ENCODE measurements at regions of chr2 and their contacts with region 1.

Region 1: DNA sequence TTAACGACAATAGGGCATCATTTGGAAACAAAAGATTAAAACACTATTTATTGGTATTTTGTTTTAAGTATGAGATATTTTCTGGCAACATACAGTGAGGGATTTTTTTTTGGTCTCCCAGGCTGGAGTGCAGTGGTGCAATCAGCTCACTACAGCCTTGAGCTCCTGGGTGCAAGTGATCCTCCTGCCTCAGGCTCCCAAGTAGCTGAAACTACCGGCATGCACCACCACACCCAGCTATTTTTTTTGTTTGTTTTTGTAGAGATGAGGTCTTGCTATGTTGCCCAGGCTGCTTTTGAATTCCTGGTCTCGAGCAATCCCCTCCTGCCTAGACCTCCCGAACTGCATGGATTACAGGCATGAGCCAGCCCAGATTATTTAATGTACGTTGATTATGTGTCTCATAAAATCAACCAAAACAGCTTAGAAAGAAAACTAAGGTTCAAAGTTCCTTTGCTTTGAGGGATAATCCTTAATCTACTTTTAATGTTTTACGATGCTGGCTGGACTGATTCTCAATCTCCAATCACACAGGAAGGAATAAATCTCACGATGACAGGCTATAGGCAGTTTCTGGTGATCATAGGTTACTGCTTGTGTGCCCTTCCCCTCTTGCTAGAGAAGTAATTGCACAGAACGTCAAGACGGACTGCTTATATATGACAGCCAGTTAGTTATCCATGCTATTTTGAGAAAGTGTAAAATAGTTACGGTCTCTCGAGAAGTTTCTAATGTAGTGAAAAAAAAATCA is 43.0 kb downstream of the C2orf74 start:
- H3K4me3 Mint-ChIP-seq: no peak overlapping the region
- H3K27ac Mint-ChIP-seq: no peak overlapping the region
- H3K4me1 Mint-ChIP-seq: no peaks in the 10 kb centered on the region
- H3K27me3 Mint-ChIP-seq: no peaks in the 10 kb centered on the region

Region 2: DNA sequence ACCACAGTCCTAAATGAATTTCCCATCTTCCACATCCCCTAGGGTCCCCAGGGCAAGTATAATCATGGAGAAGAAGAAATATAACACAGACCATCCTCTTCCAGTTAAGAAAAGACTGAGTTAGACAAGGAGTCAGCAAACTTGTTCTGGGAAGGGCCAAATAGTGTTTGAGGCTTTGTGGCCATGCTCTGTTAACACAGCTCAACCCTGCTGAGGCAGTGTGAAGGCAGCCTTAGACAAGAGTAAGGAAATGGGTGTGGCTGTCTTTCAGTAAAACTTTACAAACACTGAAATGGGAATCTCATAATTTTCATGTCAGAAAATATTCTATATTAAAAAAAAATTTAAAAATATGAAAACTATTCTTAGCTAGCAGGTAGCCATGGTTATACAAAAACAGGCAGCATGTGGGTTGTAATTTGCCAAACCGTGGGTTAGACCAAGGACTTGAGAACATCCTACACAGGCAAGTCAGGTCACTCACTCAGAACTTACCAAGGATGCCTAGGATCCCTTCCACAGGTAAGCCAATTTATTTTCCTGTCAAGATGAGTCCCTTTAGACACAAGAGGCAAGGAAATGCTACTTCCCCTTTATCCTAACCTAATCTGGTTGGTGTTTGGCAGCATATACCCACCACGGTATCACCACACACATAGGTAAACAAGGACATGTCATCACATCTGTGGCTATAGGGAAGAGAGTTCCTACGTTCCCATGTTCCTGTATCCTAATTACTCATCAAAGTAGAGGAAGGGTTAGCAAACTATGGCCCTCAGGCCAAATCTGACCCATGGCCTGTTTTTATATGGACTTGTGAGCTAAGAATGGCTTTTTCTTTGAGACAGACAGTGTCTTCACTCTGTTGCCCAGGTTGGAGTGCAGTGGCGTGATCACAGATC is 11.0 kb before region 1 on chr2:
- intact Hi-C with region 1: no loop called
- H3K4me3 Mint-ChIP-seq: no peak overlapping the region
- H3K27ac Mint-ChIP-seq: no peak overlapping the region
- H3K4me1 Mint-ChIP-seq: no peaks in the 10 kb centered on the region
- H3K27me3 Mint-ChIP-seq: no peaks in the 10 kb centered on the region

Region 3: GRCh38 chr2:61493523-61493942 is 288.6 kb after region 1 on chr2:
- intact Hi-C with region 1: loop called (anchors 10 kb)
- H3K4me3 Mint-ChIP-seq: no peak overlapping the region
- H3K27ac Mint-ChIP-seq: no peak overlapping the region
- H3K4me1 Mint-ChIP-seq: no peaks in the 10 kb centered on the region
- H3K27me3 Mint-ChIP-seq: no peaks in the 10 kb centered on the region

Measured in dendritic cell treated with granulocyte-macrophage colony-stimulating factor and Interleukin-4, amounts not matched to agents 40 ng/mL and 50 ng/mL, for 4 days (primary cell).